ENCODE measurements at regions of chr11 and their contacts with region 1.

Region 1: DNA sequence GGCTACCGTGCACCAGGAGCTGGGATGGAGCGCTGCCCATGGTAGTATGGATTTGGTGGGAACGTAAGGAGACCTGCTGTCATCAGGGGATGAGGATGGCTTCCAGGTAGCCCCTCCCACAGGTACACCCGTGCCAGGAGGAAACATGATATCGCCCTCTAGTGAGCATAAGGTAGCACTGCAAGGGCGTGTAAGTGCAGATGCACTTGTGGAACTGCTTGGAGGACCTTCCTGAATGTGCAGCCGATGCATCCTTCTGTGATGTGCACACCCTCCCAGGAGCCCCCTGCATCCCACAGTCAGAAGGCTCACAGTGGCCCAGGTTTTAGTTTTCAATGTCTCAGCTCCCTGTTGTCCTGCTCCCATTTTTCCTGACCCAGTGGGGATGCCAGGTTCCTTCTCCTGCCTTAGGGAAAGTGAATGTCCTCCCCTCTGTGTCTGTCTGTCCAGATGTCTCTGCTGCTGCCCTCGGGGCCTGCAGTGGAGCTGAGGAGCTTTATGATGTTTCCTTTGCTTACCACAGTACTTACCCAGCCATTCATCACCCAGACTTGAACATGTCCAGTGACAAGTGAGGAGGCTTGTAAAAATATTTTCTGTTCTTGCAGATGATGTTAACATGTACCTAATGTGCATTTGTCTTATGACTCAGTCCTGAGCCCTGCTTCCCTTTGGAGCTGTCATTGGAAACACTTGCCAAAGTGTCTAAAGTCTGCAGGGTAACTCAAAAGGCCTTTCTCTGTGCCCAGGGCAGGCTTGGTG is 49.2 kb downstream of the DBX1 start:
- DNase-seq: peak; percentile 98
- H3K4me3 ChIP-seq: no peak overlapping the region
- H3K27me3 ChIP-seq: no peaks in the 10 kb centered on the region
- CTCF ChIP-seq: peak; percentile 91

Region 2: DNA sequence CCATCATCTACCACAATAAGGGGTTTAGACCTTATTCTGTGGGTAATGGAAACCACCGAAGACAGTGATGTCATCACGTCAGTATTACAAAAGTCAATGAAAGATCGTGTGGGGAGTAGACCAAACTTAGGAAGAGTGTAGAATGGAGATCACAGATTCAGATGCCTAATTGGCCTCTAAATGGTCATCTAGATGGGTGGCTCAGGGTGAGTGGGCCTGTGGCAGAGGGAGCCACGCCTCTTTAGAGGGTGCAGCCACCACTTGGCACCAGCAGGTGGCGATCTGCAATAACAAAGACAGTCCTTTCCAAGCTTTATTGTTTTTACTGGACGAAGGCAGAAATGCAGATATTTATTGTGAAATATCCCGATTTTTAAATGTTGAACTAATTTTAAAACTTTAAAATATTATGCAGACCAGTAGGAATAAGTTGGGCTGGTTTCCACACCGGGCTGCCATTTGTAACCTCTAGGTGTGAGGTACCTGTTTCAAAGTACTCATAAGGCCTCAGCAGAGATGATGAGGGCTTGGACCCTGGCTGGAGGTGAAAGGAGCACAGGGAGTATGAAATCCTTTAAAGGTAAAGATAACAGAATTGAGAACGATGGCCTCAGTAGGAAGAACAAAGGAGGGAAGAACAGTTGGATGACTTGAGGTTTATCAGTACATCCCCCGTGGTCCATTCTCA is 172.8 kb before region 1 on chr11:
- CTCF ChIA-PET with region 1: interaction called, 16 read pairs
- POLR2A ChIA-PET with region 1: no interaction called
- DNase-seq: no peak
- H3K4me3 ChIP-seq: no peak overlapping the region
- H3K27me3 ChIP-seq: no peaks in the 10 kb centered on the region
- CTCF ChIP-seq: peak; percentile 77

Region 3: DNA sequence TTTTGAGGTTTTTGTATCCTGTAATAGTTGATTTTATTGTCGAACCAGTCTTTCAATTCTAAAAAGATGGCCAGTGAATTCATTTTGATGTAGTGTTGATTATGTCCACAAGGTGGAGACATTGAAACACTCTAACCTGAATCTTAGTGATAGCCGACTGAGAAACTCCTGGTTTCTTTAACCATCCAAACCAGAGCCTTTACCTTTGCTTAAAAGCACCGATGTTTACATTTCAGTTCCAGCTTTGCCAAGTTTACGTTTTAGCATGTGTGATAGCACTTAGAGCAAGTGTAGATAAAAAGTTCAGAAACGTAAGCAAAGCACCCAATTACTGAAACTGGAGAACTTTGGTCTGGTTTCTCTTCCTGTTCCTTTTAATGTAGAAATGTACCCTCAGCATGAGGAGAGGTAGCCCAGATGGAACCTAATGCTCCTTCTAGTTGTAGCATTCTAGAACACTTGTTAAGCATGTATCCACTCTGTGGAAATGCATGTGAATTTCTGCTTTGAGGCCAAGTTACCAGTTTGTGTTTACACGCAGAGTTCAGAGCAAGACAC is 159.5 kb before region 1 on chr11:
- CTCF ChIA-PET with region 1: interaction called, 40 read pairs
- POLR2A ChIA-PET with region 1: no interaction called
- DNase-seq: no peak
- H3K4me3 ChIP-seq: no peak overlapping the region
- H3K27me3 ChIP-seq: no peaks in the 10 kb centered on the region
- CTCF ChIP-seq: peak; percentile 56

Region 4: DNA sequence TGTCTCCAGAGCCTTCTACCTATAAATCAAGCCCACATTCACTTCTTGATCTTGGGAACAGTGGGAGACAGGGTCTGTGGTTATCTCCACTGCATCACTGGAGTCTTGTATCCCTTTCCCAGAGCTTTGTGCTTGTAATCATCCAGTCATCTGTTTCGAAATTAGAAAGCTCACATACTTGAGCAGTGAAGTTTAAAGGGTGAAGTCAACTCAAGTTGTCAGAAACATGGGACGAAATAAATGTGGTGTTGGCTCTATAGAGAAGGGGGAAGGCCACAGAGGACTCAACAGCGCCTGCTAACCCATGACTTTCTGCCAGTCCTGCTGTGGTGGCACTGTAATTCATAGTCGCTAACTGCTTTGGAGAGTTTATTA is 148.3 kb before region 1 on chr11:
- CTCF ChIA-PET with region 1: interaction called, 13 read pairs
- POLR2A ChIA-PET with region 1: no interaction called
- DNase-seq: peak; percentile 60
- H3K4me3 ChIP-seq: no peak overlapping the region
- H3K27me3 ChIP-seq: no peaks in the 10 kb centered on the region
- CTCF ChIP-seq: no peak

Region 5: DNA sequence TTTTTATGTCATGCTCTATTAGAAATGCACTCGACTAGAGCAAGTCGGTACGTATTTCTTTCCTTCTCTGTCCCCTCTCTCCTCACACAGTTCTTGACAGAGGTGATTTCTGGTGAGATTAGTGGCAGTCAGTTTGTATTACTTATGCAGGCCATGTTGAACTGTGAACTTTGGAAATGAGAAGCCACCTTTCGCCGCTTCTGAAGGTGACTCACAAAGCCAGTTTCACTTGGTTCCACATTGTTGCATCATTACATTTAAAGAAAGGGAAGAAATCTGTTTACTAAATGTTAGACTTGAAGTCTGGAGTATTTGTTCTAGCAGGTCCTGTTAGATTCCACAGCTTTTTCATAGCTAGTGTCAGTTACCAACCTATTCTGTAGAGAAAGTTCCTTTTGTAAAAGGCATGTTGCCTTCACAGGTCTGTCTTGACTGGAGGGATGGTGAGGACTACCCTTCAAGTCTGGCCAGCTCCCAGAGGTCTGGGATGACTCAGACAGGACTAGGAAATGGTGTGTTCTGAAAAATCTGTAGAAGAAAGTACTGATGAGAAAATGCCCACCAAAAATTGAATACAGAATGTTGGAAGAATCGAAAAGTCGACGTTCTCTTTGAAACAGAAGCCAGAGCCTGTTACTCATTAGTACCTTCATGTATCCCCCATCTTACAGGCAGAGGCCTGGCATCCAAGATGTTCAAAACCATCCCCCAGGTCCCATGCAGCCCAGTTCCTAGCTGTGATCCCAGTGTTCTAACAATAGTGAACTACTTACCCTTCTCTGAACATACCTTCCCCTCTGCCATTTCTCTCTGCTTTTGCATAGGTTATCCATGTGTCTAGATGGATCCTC is 132.2 kb before region 1 on chr11:
- CTCF ChIA-PET with region 1: interaction called, 13 read pairs
- POLR2A ChIA-PET with region 1: no interaction called
- DNase-seq: no peak
- H3K4me3 ChIP-seq: no peak overlapping the region
- H3K27me3 ChIP-seq: no peaks in the 10 kb centered on the region
- CTCF ChIP-seq: no peak

Region 6: DNA sequence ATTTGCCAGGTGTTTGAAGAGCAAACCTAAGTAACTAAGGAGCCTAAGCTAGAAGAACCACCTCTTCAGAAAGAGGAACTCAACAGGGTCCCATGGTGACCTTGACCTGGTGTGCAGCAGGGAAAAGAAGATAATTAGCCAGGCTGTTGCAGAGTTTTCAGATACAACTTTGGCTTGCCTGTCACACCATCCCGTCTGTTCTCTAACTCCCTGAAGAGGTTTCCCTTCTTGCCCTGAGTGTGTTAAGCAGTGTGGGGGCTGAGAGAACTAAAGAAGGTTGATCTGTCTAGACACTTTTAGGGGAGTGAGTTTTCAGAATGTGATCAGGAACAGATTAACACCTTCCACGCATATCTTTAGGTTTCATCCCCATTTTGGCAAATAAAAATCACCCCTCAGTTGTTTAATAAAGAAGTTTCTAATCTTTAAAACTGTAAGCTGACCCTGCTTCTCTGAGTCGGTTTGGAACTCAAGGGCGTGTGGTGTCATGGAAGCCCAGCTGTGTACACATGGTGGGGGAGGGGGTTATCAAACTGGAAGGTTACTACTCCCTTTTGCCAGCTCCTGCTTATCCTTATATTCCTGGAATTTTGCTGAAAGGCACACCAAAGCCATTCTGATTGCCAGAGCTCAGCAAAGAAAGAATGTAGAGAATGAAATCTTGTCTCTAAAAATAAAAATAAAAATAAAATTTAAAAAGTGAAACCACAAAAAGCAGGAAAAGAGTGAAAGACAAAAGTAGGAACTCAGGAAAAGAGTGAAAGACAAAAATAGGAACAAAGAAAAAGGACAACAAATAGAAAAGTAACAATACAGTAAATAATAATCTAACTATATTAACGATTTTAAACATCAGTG is 21.1 kb before region 1 on chr11:
- CTCF ChIA-PET with region 1: interaction called, 13 read pairs
- POLR2A ChIA-PET with region 1: no interaction called
- DNase-seq: no peak
- H3K4me3 ChIP-seq: no peak overlapping the region
- H3K27me3 ChIP-seq: no peaks in the 10 kb centered on the region
- CTCF ChIP-seq: no peak

Region 7: DNA sequence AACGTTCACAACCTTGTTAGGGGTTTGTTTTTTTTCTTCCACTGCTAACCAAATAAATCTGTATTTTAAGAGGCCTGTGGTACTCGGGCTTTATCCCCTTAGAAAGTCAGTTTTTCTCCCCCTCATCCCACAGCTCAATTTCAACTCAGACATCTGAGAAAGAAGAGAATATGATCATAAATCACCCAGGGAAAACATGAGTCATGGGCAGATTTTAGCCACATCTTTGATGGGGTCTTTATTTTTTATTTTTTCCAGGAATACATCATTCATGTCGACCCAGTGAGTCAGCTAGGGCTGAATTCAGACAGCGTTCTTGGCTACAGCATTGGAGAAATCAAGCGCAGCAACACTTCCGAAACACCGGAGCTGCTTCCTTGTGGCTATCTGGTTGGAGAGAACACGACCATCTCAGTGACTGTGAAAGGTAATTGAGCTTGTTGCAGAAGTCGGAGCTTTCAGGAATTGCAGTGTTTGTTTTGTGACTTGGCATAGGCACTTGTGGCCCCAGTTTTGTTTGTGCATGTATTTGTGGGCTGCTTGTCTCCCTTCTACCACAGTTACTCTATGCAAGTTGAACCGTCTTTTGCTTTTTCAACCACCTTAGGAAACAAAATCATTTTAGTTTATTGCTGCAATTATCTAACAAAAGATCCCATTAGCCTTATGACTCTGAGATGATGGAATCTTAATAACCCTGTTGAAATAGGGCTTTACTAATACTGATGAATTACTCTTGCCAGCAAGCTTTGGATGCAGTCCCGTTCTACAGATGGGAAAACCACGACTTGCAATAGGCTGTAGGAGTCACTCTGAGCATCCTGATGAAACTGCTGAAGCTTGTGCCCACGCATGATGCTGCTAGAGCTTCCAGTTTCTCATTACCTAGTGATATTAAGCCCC is 13.5 kb before region 1 on chr11:
- CTCF ChIA-PET with region 1: interaction called, 52 read pairs
- POLR2A ChIA-PET with region 1: no interaction called
- DNase-seq: peak; percentile 93
- H3K4me3 ChIP-seq: no peak overlapping the region
- H3K27me3 ChIP-seq: no peaks in the 10 kb centered on the region
- CTCF ChIP-seq: no peak